Spleen (tissue), 13 donors: ENCODE measurements at regions of chr9 and their contacts with region 1.

Region 1: GRCh38 chr9:5186416-5187169 is 1.2 kb upstream of the INSL6 start:
- DNase-seq: no peak
- H3K4me3 ChIP-seq: no peak overlapping the region
- H3K27ac ChIP-seq: no peak overlapping the region
- H3K4me1 ChIP-seq: peaks cover 0 to 6% (median 0%) of the 10 kb centered on the region in 6 donors
- H3K27me3 ChIP-seq: no peaks in the 10 kb centered on the region
- CTCF ChIP-seq: peak; percentile 62 to 86 (median 72)
- POLR2A ChIP-seq: no peak

Region 2: DNA sequence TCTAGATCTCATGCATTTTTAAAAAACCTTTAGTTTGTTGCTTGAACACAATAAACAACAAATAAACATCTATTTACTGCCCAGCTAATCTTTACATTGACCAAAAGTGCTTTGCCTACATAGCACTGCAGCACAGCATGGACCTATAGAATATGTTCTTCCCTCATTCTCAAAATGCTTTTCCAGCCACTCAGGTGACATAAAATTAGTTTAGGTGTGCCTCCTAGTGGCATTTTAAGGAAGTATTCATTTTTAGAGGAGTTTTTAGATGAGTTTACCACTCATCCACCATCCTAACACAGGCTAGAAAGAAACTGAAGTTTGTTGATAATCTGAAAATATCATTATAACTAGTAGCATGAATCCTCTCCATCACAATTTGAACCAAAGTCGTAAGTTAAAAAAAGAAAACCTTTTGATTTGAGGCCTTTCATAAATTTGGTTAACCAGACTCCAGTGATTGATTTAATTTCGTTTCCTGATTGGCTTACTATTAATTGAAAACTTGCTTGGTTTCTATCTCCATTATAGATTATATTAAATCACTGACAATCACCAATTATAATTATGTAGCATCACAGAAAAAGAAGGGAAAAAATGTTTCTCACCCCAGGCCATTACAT is 238.5 kb after region 1 on chr9:
- intact Hi-C with region 1: loop called (anchors 5 kb)
- DNase-seq: no peak
- H3K4me3 ChIP-seq: no peak overlapping the region
- H3K27ac ChIP-seq: no peak overlapping the region
- H3K4me1 ChIP-seq: no peaks in the 10 kb centered on the region
- H3K27me3 ChIP-seq: no peaks in the 10 kb centered on the region
- CTCF ChIP-seq: peak in 9 of 11 experiments; percentile 10 to 55 (median 47)
- POLR2A ChIP-seq: no peak

Region 3: GRCh38 chr9:5593904-5594303 is 407.3 kb after region 1 on chr9:
- intact Hi-C with region 1: loop called (anchors 5 kb)
- DNase-seq: no peak
- H3K4me3 ChIP-seq: no peak overlapping the region
- H3K27ac ChIP-seq: peak overlapping the region in 4 of 8 donors; percentile 33 to 62 (median 43)
- H3K4me1 ChIP-seq: peaks cover 8 to 56% (median 25%) of the 10 kb centered on the region in 6 donors
- H3K27me3 ChIP-seq: no peaks in the 10 kb centered on the region
- CTCF ChIP-seq: no peak
- POLR2A ChIP-seq: no peak

Region 4: DNA sequence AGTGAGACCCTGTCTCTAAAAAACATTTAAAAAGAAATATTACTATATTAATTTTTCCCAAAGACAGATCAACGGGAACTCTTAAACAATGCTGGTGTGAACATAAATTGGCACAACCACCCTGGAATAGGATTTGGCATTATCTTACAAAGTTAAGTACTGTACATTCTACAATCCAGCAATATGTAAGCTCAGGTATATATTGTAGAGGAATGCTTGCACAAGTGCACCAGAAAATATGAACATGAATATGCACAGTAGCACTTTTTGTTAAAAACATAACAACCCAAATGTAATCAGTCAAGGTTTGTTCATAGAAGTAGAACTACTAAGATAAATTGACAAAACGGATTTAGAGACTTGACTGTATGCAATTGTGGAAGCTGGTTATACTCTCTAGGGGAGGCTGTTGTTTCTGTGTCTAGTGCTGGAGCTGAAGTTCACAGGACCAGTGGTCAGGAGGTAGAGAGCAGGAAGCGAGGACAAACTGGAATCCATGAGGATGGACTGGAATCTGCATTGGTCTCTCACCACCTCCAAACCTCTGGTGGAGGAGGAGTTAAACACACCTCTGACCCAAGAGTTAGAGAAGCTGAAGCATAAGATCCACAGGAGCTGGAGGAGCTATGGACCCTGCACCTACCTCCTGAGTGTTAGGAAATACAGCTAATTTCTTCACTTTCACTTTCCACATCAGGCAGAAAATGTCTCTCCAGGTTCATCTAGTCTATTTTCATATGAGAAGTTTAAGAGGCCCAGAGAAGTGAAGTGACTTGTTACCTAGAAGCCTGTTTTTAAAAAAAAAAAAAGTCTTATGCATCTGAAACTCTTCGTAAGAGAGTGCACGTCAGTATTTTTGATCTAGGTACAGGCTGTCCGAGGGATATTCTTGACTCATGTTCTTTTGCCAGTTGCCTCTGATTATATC is 422.0 kb after region 1 on chr9:
- intact Hi-C with region 1: loop called (anchors 5 kb)
- DNase-seq: no peak
- H3K4me3 ChIP-seq: peak overlapping the region in 4 of 8 donors; percentile 5 to 58 (median 19)
- H3K27ac ChIP-seq: peak overlapping the region in 6 of 8 donors; percentile 13 to 76 (median 52)
- H3K4me1 ChIP-seq: peaks cover 0 to 28% (median 16%) of the 10 kb centered on the region in 6 donors
- H3K27me3 ChIP-seq: no peaks in the 10 kb centered on the region
- CTCF ChIP-seq: no peak
- POLR2A ChIP-seq: peak in 1 of 3 donors; percentile 12